Heart right ventricle (tissue), 16 donors: ENCODE measurements at regions of chr17 and their contacts with region 1.

Region 1: GRCh38 chr17:52744179-52744578 is 585.7 kb upstream of the CA10 start:
- DNase-seq: no peak
- ATAC-seq: no peak
- H3K4me3 ChIP-seq: no peak overlapping the region
- H3K27ac ChIP-seq: no peak overlapping the region
- H3K4me1 ChIP-seq: no peaks in the 10 kb centered on the region
- H3K27me3 ChIP-seq: no peaks in the 10 kb centered on the region
- CTCF ChIP-seq: no peak

Region 2: DNA sequence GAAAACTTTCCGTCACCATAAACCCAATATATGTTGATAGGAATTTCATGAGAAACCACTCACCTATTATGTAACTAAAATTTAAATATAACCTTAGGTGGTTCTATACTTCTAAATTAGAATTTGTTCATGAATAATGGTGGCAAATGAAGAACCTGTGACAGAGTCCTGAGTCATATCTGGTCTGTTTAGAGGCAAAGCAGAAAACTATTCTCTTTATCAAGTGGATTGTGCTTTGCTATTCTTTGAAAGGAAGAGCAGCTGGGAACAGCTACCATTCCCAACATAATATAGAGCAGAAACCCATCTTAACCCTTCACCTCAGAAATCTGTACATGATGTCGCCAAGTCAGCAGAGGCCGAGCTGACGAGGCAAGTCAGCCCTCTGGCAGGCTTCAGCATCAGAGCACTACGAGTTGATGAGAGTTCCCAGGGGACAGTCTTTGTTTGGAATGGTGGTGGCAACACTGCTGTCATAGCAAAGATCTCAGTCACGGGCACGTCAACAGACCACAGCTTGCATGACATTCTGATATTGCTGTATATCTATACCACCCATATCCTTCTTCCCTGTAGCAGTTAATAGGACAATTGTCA is 46.3 kb after region 1 on chr17:
- intact Hi-C with region 1: loop called in 1 of 10 experiments (anchors 10 kb)
- DNase-seq: no peak
- ATAC-seq: peak in 2 of 8 donors; percentile 20 to 34
- H3K4me3 ChIP-seq: no peak overlapping the region
- H3K27ac ChIP-seq: no peak overlapping the region
- H3K4me1 ChIP-seq: peaks cover 0 to 2% (median 0%) of the 10 kb centered on the region in 9 donors
- H3K27me3 ChIP-seq: no peaks in the 10 kb centered on the region
- CTCF ChIP-seq: no peak